ENCODE measurements at regions of chr6 and their contacts with region 1.

Region 1: DNA sequence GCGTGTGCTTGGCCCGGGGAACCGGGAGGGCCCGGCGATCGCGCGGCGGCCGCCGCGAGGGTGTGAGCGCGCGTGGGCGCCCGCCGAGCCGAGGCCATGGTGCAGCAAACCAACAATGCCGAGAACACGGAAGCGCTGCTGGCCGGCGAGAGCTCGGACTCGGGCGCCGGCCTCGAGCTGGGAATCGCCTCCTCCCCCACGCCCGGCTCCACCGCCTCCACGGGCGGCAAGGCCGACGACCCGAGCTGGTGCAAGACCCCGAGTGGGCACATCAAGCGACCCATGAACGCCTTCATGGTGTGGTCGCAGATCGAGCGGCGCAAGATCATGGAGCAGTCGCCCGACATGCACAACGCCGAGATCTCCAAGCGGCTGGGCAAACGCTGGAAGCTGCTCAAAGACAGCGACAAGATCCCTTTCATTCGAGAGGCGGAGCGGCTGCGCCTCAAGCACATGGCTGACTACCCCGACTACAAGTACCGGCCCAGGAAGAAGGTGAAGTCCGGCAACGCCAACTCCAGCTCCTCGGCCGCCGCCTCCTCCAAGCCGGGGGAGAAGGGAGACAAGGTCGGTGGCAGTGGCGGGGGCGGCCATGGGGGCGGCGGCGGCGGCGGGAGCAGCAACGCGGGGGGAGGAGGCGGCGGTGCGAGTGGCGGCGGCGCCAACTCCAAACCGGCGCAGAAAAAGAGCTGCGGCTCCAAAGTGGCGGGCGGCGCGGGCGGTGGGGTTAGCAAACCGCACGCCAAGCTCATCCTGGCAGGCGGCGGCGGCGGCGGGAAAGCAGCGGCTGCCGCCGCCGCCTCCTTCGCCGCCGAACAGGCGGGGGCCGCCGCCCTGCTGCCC is 1.1 kb downstream of the SOX4 start:
- DNase-seq: peak; percentile 84

Region 2: GRCh38 chr6:21666199-21666691 is 71.6 kb after region 1 on chr6:
- intact Hi-C with region 1: loop called (anchors 2 kb)
- DNase-seq: no peak

Region 3: GRCh38 chr6:21808045-21808470 is 213.4 kb after region 1 on chr6:
- intact Hi-C with region 1: loop called (anchors 5 kb)
- DNase-seq: no peak

Region 4: GRCh38 chr6:21846541-21847451 is 252.1 kb after region 1 on chr6:
- intact Hi-C with region 1: loop called (anchors 5 kb)
- DNase-seq: no peak

Region 5: GRCh38 chr6:21935561-21936028 is 340.9 kb after region 1 on chr6:
- intact Hi-C with region 1: loop called (anchors 5 kb)
- DNase-seq: no peak

Region 6: DNA sequence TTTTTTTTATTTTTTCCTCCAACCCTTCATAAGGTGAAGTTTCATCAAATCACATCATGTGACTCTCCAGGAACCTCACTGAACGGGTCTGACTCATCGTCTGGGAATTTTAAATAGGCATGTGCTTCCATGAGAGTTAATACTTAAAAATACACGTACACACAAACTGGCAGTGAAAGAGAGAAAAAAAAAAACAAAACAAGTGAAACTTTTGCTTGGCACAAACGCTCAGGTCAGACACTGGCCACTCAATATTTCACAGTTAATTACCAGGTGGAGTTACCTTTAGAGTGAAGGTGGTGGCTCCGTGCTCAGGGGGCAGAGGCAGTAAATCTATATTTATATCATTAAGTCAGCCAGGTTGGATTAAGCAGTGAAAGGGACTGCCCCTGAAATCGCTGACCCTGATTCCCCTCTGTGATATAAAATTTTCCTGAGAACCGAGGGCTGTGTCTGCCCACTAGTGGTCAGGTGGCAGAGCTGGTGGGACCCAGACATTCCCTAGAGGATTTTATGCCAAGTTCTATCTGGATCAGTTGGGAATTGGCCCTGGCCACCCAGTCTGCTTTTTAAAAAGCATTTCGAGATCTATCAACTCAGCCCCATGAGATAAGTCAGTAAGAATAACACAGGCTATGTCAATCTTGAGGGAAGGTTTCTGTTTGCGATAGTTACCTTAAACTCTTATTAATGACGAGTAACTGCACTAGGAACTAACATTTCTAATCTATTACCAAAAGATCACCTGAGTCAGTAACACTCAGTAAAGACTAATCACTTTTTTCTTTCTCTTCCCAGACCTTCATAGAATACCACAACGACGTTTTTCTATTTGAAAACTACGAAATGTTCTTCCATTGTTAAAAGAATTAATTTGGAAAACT is 1233.8 kb after region 1 on chr6:
- intact Hi-C with region 1: loop called (anchors 5 kb)
- DNase-seq: no peak